Activated CD8-positive, alpha-beta T cell treated with anti-CD3 and anti-CD28 coated beads for 36 hours (primary cell): ENCODE measurements at regions of chr13 and their contacts with region 1.

Region 1: GRCh38 chr13:23871616-23872220 is 17.5 kb downstream of the MIPEP start:
- DNase-seq: no peak
- ATAC-seq: no peak
- H3K4me3 Mint-ChIP-seq: no peak overlapping the region
- H3K27ac Mint-ChIP-seq: no peak overlapping the region
- H3K4me1 Mint-ChIP-seq: no peaks in the 10 kb centered on the region
- H3K27me3 Mint-ChIP-seq: no peaks in the 10 kb centered on the region
- CTCF ChIP-seq: peak; percentile 78

Region 2: DNA sequence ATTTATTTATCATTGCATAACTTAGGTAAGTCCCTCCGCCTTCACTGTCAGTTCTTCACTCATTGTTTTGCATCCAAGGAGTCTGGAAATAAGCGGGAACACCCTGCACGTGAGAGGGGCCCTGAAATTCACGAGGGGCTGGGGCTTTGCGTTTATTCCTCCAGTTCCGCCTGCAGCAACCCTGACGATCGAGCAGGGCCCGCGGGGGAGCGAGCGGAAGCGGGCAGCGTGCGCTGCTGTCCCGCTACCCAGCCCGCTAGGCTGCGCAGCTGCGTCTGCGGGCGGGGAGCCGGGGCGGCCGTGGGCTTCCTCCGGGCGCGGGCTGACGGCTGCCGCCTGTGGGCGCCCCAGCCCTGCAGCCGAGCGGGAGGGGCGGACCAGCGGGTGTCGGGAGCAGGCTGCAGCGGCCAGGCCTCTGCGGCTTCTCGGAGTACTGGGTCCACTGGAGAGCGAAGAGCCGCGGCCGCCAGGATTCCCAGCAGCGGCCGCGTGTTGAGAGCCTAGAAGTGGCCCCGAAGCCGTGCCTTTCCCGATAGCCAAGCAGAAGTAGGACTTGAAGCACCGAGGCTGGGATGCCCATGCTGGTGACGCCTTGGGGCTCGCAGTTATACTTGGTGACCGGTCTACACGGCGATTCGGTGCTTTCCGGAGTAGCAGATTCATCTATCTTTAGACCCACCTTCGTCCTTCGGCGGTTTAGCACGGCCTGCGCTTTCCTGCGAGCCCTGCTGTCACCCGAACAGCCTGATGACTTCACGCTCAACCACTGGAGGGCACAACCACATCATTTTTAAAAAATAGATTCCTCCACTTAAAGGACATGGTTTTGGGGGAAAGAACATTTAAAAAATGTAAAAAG is 405.3 kb before region 1 on chr13:
- CTCF ChIA-PET with region 1: interaction called, 10 read pairs
- POLR2A ChIA-PET with region 1: no interaction called
- intact Hi-C with region 1: loop called (anchors 2 kb)
- DNase-seq: peak; percentile 79
- ATAC-seq: peak; percentile 88
- H3K4me3 Mint-ChIP-seq: peak overlapping the region; percentile 51
- H3K27ac Mint-ChIP-seq: no peak overlapping the region
- H3K4me1 Mint-ChIP-seq: peaks cover 6% of the 10 kb centered on the region
- H3K27me3 Mint-ChIP-seq: peaks cover 6% of the 10 kb centered on the region
- CTCF ChIP-seq: peak; percentile 55